Activated CD8-positive, alpha-beta memory T cell treated with anti-CD3 and anti-CD28 coated beads, Interleukin-2, amount 10 ng/mL, durations not matched to agents 7 days and 5 days (primary cell): ENCODE measurements at regions of chr10 and their contacts with region 1.

Region 1: DNA sequence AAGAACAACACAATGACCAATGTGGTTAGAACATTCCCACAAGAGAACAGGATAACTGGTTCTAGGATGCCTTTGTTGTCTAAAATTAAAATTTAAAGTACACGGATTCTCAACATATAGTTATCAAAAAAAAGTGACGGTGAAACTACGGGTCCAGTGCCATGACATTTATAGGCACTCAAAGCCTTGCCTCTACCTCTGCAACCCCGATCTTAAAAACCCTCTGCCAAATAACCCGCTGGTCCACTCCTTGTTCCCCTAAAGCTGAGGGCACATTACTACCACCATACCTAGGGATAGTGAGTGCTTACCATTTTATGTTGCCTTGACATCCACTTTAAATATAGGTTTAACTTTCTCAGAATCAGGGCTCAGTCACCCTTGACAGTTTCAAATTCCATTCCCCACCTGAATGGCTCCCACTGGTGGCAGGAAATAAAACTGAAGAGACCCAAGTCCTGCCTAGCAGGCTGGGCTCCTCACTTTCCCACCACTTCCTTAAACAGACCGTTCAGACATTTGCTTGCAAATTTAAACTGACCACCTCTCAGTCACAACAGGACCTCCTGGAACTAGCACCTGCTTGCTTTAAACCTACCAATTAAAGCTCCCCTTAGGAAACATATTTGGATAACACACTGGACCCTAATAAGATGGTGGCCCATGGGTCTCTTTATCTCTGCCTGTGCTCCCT is 169.9 kb upstream of the ASAH2 start:
- DNase-seq: peak; percentile 69
- ATAC-seq: peak; percentile 27
- H3K4me3 Mint-ChIP-seq: no peak overlapping the region
- H3K27ac Mint-ChIP-seq: peak overlapping the region; percentile 59
- H3K4me1 Mint-ChIP-seq: peaks cover 46% of the 10 kb centered on the region
- H3K27me3 Mint-ChIP-seq: no peaks in the 10 kb centered on the region

Region 2: GRCh38 chr10:50439806-50440205 is 18.6 kb after region 1 on chr10:
- CTCF ChIA-PET with region 1: no interaction called
- DNase-seq: no peak
- ATAC-seq: no peak
- H3K4me3 Mint-ChIP-seq: no peak overlapping the region
- H3K27ac Mint-ChIP-seq: no peak overlapping the region
- H3K4me1 Mint-ChIP-seq: peaks cover 32% of the 10 kb centered on the region
- H3K27me3 Mint-ChIP-seq: no peaks in the 10 kb centered on the region

Region 3: GRCh38 chr10:50501918-50502452 is 80.8 kb after region 1 on chr10:
- CTCF ChIA-PET with region 1: interaction called, 11 read pairs
- DNase-seq: peak; percentile 60
- ATAC-seq: peak; percentile 68
- H3K4me3 Mint-ChIP-seq: no peak overlapping the region
- H3K27ac Mint-ChIP-seq: peak overlapping the region; percentile 78
- H3K4me1 Mint-ChIP-seq: peaks cover 66% of the 10 kb centered on the region
- H3K27me3 Mint-ChIP-seq: peaks cover 10% of the 10 kb centered on the region